ENCODE measurements at regions of chr10 and their contacts with region 1.

Region 1: DNA sequence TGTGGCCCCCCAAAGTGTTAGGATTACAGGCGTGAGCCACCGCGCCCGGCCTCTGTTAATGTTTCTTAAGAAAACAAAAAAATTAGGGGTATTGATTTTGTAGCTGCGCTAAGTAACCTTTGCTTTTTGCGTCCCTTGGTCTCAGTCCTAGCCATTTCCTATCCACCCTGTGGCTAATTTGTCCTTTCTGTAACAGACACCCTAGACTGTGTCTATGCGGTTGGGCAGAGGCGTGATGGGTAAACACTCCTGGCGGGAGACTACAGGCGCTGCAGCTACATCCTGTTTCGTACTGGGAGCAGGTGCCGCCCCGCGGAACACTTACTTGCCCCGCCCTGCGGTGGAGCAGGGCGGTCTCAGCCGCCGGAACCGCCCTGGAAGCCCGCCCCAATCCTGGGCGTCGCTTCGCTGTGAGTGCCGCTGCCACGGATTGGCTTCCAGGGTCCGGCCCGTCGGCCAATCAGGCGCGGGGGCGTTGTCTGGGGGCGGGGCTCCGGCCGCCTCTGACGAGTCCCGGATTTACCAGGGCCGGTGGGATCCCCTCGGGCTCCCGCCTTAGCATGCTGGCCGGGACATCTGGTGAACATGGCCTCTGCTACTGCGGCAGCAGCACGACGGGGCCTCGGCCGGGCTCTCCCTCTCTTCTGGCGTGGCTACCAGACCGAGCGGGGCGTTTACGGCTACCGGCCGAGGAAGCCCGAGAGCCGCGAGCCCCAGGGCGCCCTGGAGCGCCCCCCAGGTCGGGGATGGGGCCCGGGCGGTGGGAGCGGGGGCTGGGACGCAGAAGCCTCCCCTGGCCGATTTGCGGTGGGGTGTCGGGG is at the start of gene DHTKD1:
- DNase-seq: peak; percentile 94
- ATAC-seq: peak; percentile 97
- H3K4me3 ChIP-seq: peak within 1 kb of the TSS; percentile 94
- H3K27ac ChIP-seq: peak within 1 kb of the TSS; percentile 84
- H3K4me1 ChIP-seq: peaks cover 13% of the 10 kb centered on the region
- H3K27me3 ChIP-seq: no peaks in the 10 kb centered on the region
- CTCF ChIP-seq: peak in 2 of 3 experiments; percentile 7 to 19; a peak in 1 of 6 replicates
- EP300 ChIP-seq: peak; percentile 58 to 63; a peak in 2 of 4 replicates
- POLR2A ChIP-seq: peak; percentile 87
- RAD21 ChIP-seq: no peak
- polyA plus RNA-seq, gene DHTKD1: 11.3 to 12.0 TPM

Region 2: DNA sequence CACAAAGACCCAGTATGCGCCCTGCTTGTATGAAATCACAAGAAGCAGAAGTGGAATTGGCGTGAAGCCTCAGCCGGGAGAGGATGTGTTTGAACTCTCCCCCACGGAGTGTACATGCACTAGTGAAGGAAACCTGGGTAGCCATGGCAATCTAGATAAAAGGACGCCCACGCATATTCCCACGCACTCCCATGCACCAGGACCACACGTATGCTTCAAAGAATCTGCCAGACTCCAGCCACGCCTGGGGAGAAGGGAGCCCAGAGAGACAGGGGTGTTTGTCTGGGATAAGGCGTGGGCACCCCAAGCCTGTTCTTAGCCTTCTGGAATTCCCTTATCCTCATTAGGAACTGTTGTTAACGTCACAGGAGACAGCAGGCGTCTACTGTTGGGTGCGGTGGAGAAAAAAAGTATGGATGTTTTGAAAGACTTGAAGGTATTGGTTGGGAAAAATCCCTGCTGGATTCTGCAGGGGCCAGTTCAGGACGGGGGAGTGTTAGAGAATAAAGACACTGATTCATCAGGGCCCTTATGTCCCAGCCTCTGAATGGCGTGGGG is 355.4 kb before region 1 on chr10:
- CTCF ChIA-PET with region 1: no interaction called
- POLR2A ChIA-PET with region 1: no interaction called
- RAD21 ChIA-PET with region 1: no interaction called
- SMC1A ChIA-PET with region 1: no interaction called
- in situ Hi-C with region 1: no loop called
- intact Hi-C with region 1: no loop called
- DNase-seq: peak; percentile 59
- ATAC-seq: peak; percentile 31
- H3K4me3 ChIP-seq: no peak overlapping the region
- H3K27ac ChIP-seq: no peak overlapping the region; the same call in 1 of the 2 replicates
- H3K4me1 ChIP-seq: peaks cover 42% of the 10 kb centered on the region
- H3K27me3 ChIP-seq: no peaks in the 10 kb centered on the region
- CTCF ChIP-seq: no peak
- EP300 ChIP-seq: 0 out of 4 replicates have a peak, but pooled peaks of 1 of the 2 experiments have one; percentile 10
- POLR2A ChIP-seq: no peak
- RAD21 ChIP-seq: no peak

Region 3: GRCh38 chr10:12018438-12019282 is 50.0 kb before region 1 on chr10:
- CTCF ChIA-PET with region 1: no interaction called
- POLR2A ChIA-PET with region 1: no interaction called
- RAD21 ChIA-PET with region 1: no interaction called
- SMC1A ChIA-PET with region 1: no interaction called
- in situ Hi-C with region 1: no loop called
- intact Hi-C with region 1: no loop called
- DNase-seq: no peak
- ATAC-seq: no peak
- H3K4me3 ChIP-seq: no peak overlapping the region
- H3K27ac ChIP-seq: no peak overlapping the region
- H3K4me1 ChIP-seq: peaks cover 9% of the 10 kb centered on the region
- H3K27me3 ChIP-seq: no peaks in the 10 kb centered on the region
- CTCF ChIP-seq: no peak
- EP300 ChIP-seq: no peak
- POLR2A ChIP-seq: no peak
- RAD21 ChIP-seq: no peak

Region 4: DNA sequence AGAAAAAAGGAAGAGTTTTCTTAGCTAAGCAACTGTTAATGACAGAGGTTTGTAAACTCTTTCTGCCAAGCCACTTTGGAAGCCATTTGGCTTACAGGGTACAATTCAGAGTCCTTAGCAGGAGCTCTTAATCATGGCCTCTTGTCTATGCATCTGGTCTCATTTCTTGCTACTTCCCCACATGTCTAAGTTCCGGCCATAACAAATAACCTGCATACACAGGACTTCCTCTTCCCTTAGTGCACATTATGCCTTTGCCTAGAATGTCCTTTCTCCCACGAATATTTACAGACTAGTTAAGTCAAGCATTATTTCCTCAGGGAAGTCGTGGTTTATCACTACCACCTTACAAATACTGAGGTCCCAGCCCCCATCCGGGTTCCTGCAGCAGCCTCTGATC is 17.4 kb before region 1 on chr10:
- CTCF ChIA-PET with region 1: interaction called, 8 read pairs
- POLR2A ChIA-PET with region 1: interaction called, 12 read pairs
- RAD21 ChIA-PET with region 1: interaction called, 8 read pairs
- SMC1A ChIA-PET with region 1: interaction called, 64 read pairs
- in situ Hi-C with region 1: no loop called
- intact Hi-C with region 1: no loop called
- DNase-seq: no peak
- ATAC-seq: no peak
- H3K4me3 ChIP-seq: no peak overlapping the region
- H3K27ac ChIP-seq: peak overlapping the region; percentile 5
- H3K4me1 ChIP-seq: peaks cover 46% of the 10 kb centered on the region
- H3K27me3 ChIP-seq: no peaks in the 10 kb centered on the region
- CTCF ChIP-seq: no peak
- EP300 ChIP-seq: no peak
- POLR2A ChIP-seq: no peak
- RAD21 ChIP-seq: no peak

Region 5: GRCh38 chr10:12121673-12122072 is 53.0 kb after region 1 on chr10:
- CTCF ChIA-PET with region 1: no interaction called
- POLR2A ChIA-PET with region 1: interaction called, 9 read pairs
- RAD21 ChIA-PET with region 1: interaction called, 6 read pairs
- SMC1A ChIA-PET with region 1: interaction called, 4 read pairs
- in situ Hi-C with region 1: no loop called
- intact Hi-C with region 1: loop called (anchors 2 kb)
- DNase-seq: peak; percentile 62
- ATAC-seq: peak; percentile 72
- H3K4me3 ChIP-seq: peak overlapping the region; percentile 19; the same call in 1 of the 2 replicates
- H3K27ac ChIP-seq: peak overlapping the region; percentile 87
- H3K4me1 ChIP-seq: peaks cover 22% of the 10 kb centered on the region
- H3K27me3 ChIP-seq: no peaks in the 10 kb centered on the region
- CTCF ChIP-seq: no peak
- EP300 ChIP-seq: no peak; a peak in 2 of 4 replicates
- POLR2A ChIP-seq: no peak
- RAD21 ChIP-seq: no peak